Activated CD4-positive, alpha-beta T cell treated with anti-CD3 and anti-CD28 coated beads, Interleukin-2, amount 10 ng/mL, durations not matched to agents 24 days and 14 days (primary cell): ENCODE measurements at regions of chr20 and their contacts with region 1.

Region 1: DNA sequence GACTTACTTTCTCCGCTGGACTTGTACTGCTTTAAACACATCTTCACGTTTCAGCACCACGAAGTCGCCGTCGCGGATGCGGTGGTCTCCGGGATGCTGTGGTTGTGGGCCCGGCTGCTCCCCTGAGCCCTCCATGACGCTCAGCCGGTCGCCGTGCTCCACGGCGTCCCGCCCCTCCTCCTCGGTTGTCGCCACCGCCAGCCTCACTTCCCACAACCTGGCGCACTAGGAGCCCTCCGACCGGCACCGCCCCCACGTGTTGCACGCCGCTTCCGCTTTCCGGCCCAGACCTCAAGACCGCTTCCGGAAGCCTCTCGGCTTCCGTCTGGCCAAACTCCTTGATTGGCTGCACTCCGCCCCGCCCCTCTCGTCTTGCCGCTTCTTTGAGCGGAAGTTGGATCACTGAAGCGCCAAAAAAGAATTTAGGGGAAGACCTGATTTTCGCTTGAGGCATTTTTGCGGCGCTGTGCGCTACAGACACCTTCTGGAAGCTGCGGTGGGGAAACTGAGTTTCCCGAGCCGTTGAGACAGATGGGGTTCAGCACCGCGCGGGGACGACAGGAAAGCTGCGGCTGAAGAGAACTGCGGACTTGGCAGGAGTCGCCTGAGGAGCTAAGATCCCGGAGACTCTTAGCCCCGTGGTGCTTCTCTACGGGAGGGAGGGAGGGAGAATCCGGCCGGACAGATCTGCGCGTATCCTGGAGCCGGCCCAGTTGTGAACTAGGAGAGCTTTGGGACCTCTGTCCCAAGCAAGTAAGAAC is at the starts of genes MCM8 and TRMT6:
- DNase-seq: peak; percentile 99
- H3K4me3 Mint-ChIP-seq: peak within 1 kb of the TSS; percentile 99
- H3K27ac Mint-ChIP-seq: peak within 1 kb of the TSS; percentile 98
- H3K4me1 Mint-ChIP-seq: peaks cover 46% of the 10 kb centered on the region
- H3K27me3 Mint-ChIP-seq: peaks cover 2% of the 10 kb centered on the region
- total RNA-seq, gene MCM8: 41.0 and 42.2 TPM in 2 replicates
- total RNA-seq, gene TRMT6: 33.6 and 35.5 TPM in 2 replicates

Region 2: GRCh38 chr20:5918856-5919625 is 31.4 kb before region 1 on chr20:
- intact Hi-C with region 1: no loop called
- DNase-seq: peak; percentile 66
- H3K4me3 Mint-ChIP-seq: no peak overlapping the region
- H3K27ac Mint-ChIP-seq: peak overlapping the region; percentile 60
- H3K4me1 Mint-ChIP-seq: peaks cover 15% of the 10 kb centered on the region
- H3K27me3 Mint-ChIP-seq: peaks cover 17% of the 10 kb centered on the region

Region 3: GRCh38 chr20:5967469-5967868 is 17.0 kb after region 1 on chr20:
- intact Hi-C with region 1: no loop called
- DNase-seq: no peak
- H3K4me3 Mint-ChIP-seq: no peak overlapping the region
- H3K27ac Mint-ChIP-seq: no peak overlapping the region
- H3K4me1 Mint-ChIP-seq: peaks cover 2% of the 10 kb centered on the region
- H3K27me3 Mint-ChIP-seq: no peaks in the 10 kb centered on the region

Region 4: GRCh38 chr20:5996765-5997164 is 46.3 kb after region 1 on chr20:
- intact Hi-C with region 1: loop called (anchors 2 kb)
- DNase-seq: peak; percentile 90
- H3K4me3 Mint-ChIP-seq: peak overlapping the region; percentile 18
- H3K27ac Mint-ChIP-seq: peak overlapping the region; percentile 51
- H3K4me1 Mint-ChIP-seq: peaks cover 15% of the 10 kb centered on the region
- H3K27me3 Mint-ChIP-seq: no peaks in the 10 kb centered on the region